BJ (cell line): ENCODE measurements at regions of chr9 and their contacts with region 1.

Region 1: GRCh38 chr9:33778700-33779351 is 16.5 kb upstream of the PRSS3 start:
- DNase-seq: no peak
- H3K4me3 ChIP-seq: no peak overlapping the region
- H3K27me3 ChIP-seq: no peaks in the 10 kb centered on the region
- CTCF ChIP-seq: peak; percentile 86

Region 2: GRCh38 chr9:33731142-33731541 is 47.7 kb before region 1 on chr9:
- CTCF ChIA-PET with region 1: interaction called, 48 read pairs
- POLR2A ChIA-PET with region 1: no interaction called
- DNase-seq: no peak
- H3K4me3 ChIP-seq: no peak overlapping the region
- H3K27me3 ChIP-seq: peaks cover 2% of the 10 kb centered on the region; the same call in 1 of the 2 replicates
- CTCF ChIP-seq: no peak

Region 3: DNA sequence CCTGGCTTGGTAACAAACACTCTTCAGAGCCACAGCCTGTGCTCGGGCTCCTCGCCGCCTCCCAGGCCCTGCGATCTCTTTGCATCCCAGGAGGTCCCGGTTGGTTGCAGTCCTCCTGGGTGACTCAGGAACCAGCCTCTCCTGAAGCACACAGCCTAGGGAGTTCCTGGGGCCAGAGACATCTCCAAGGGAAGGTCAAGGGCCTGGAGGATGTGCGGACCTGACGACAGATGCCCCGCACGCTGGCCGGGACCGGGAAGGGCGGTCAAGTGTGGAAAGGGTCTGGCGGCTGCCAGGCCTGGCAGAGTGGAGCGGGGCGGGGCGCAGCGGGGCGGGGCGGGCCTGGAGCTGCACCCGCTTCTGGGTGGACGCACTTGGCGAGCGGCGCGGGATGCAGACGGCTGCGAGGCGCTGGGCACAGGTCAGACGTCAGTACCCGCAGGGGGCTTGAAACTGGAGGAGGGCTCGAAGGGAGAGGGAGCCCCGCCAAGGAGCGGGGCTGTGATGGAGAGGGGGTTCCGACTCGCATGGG is 28.5 kb before region 1 on chr9:
- CTCF ChIA-PET with region 1: interaction called, 25 read pairs
- POLR2A ChIA-PET with region 1: no interaction called
- DNase-seq: no peak
- H3K4me3 ChIP-seq: peak overlapping the region; percentile 43
- H3K27me3 ChIP-seq: no peaks in the 10 kb centered on the region; the same call in 1 of the 2 replicates
- CTCF ChIP-seq: no peak

Region 4: GRCh38 chr9:33791117-33791516 is 12.3 kb after region 1 on chr9:
- CTCF ChIA-PET with region 1: interaction called, 15 read pairs
- POLR2A ChIA-PET with region 1: no interaction called
- DNase-seq: no peak
- H3K4me3 ChIP-seq: no peak overlapping the region
- H3K27me3 ChIP-seq: no peaks in the 10 kb centered on the region
- CTCF ChIP-seq: no peak

Region 5: GRCh38 chr9:34010979-34011378 is 232.2 kb after region 1 on chr9:
- CTCF ChIA-PET with region 1: no interaction called
- POLR2A ChIA-PET with region 1: interaction called, 12 read pairs
- DNase-seq: no peak
- H3K4me3 ChIP-seq: no peak overlapping the region
- H3K27me3 ChIP-seq: no peaks in the 10 kb centered on the region
- CTCF ChIP-seq: peak; percentile 33; the same call in 1 of the 2 replicates